ENCODE measurements at regions of chr15 and their contacts with region 1.

Region 1: GRCh38 chr15:44663409-44664308 is at the start of gene SPG11:
- DNase-seq: peak; percentile 88
- ATAC-seq: peak; percentile 83
- H3K4me3 Mint-ChIP-seq: peak within 1 kb of the TSS; percentile 98
- H3K27ac Mint-ChIP-seq: peak within 1 kb of the TSS; percentile 99
- H3K4me1 Mint-ChIP-seq: peaks cover 58% of the 10 kb centered on the region
- H3K27me3 Mint-ChIP-seq: no peaks in the 10 kb centered on the region
- CTCF ChIP-seq: no peak
- total RNA-seq, gene SPG11: 132 and 161 TPM in 2 replicates

Region 2: GRCh38 chr15:44536962-44537734 is 126.5 kb before region 1 on chr15 and contains the start of gene EIF3J:
- CTCF ChIA-PET with region 1: no interaction called
- POLR2A ChIA-PET with region 1: interaction called, 4 read pairs
- intact Hi-C with region 1: loop called (anchors 1 kb)
- DNase-seq: peak; percentile 90
- ATAC-seq: peak; percentile 89
- H3K4me3 Mint-ChIP-seq: peak within 1 kb of the TSS; percentile 92
- H3K27ac Mint-ChIP-seq: peak within 1 kb of the TSS; percentile 93
- H3K4me1 Mint-ChIP-seq: peaks cover 50% of the 10 kb centered on the region
- H3K27me3 Mint-ChIP-seq: no peaks in the 10 kb centered on the region
- CTCF ChIP-seq: no peak
- total RNA-seq, gene EIF3J: 78.9 and 88.4 TPM in 2 replicates

Region 3: DNA sequence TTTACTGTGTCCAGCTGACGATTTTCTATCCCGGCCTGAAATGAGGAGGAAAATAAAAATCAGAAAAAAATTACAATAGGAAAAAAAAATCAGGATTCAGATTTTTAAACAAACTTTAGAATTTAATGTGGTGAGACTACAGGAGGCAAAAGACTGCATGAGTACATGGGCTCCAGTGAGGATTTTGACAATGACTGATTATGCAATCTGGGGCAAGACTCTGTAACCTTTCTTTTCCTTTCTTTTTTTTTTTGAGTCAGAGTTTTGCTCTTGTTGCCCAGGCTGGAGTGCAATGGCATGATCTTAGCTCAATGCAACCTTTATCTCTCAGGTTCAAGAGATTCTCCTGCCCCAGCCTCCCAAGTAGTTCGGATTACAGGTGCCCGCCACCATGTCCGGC is 30.1 kb before region 1 on chr15:
- CTCF ChIA-PET with region 1: no interaction called
- POLR2A ChIA-PET with region 1: interaction called, 6 read pairs
- intact Hi-C with region 1: loop called (anchors 5 kb)
- DNase-seq: no peak
- ATAC-seq: no peak
- H3K4me3 Mint-ChIP-seq: peak overlapping the region; percentile 35
- H3K27ac Mint-ChIP-seq: peak overlapping the region; percentile 82
- H3K4me1 Mint-ChIP-seq: peaks cover 8% of the 10 kb centered on the region
- H3K27me3 Mint-ChIP-seq: no peaks in the 10 kb centered on the region
- CTCF ChIP-seq: no peak

Region 4: DNA sequence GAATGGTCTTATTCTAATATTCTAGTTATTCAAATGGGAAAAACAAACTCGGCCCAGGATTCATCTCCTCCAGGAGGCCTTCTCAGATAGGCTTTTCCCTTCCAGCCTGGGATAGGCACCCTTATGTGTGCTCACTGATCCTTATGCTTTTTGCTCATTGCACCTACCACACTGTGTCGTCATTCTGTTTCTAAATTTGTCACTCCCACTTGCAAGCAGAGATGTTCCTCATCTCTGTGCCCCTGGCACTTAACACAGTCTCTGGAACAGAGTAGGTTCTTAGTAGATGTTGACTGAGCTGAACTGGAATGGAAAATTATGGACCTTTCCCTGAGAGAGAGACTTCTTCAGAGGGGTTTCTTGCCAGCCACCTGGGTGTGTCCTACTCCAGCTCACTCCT is 18.6 kb after region 1 on chr15:
- CTCF ChIA-PET with region 1: interaction called, 16 read pairs
- POLR2A ChIA-PET with region 1: interaction called, 60 read pairs
- intact Hi-C with region 1: loop called (anchors 1 kb)
- DNase-seq: no peak
- ATAC-seq: peak; percentile 26
- H3K4me3 Mint-ChIP-seq: peak overlapping the region; percentile 60
- H3K27ac Mint-ChIP-seq: peak overlapping the region; percentile 91
- H3K4me1 Mint-ChIP-seq: peaks cover 76% of the 10 kb centered on the region
- H3K27me3 Mint-ChIP-seq: no peaks in the 10 kb centered on the region
- CTCF ChIP-seq: no peak

Region 5: DNA sequence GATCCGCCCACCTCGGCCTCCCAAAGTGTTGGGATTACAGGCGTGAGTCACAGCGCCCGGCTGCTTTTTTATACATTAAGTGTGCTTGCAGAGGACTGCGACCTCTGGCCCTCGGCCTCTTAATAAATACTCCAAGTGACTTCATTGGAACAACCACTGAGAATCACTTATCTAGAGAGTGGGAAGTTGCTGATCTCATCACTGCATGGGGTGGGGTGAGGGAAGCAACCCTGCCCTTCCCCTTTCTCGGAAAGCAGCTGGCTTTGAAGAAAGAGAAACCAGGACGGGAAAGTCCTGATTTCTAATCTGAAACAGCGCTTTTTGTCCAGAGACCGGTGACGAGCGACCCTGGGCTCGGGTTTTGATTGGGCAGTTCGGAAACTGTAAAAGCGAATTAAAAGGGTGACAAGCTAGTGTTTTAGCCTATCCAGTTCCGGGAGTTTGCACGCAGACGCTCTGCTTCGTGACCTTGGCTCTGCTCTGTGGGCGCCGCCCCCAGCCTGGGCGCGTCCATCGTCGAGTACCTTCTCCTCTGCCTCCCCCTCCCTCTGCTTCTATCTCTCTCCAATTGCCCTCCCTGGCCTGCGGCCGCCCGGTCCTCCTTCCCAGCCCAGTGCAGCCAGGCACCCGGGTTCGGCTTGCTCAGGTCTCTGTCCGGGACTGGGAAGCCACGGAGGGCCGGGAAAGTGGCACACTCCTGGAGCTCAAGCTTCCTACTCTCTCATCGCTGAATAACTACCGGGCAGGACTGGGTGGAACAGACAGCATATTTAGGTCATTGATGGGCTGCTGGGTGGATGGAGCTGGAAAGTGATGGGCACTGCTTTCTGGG is 65.1 kb after region 1 on chr15:
- CTCF ChIA-PET with region 1: interaction called, 239 read pairs
- POLR2A ChIA-PET with region 1: interaction called, 798 read pairs
- intact Hi-C with region 1: loop called (anchors 1 kb)
- DNase-seq: peak; percentile 86
- ATAC-seq: peak; percentile 74
- H3K4me3 Mint-ChIP-seq: peak overlapping the region; percentile 99
- H3K27ac Mint-ChIP-seq: peak overlapping the region; percentile 100
- H3K4me1 Mint-ChIP-seq: peaks cover 75% of the 10 kb centered on the region
- H3K27me3 Mint-ChIP-seq: no peaks in the 10 kb centered on the region
- CTCF ChIP-seq: no peak

Region 6: DNA sequence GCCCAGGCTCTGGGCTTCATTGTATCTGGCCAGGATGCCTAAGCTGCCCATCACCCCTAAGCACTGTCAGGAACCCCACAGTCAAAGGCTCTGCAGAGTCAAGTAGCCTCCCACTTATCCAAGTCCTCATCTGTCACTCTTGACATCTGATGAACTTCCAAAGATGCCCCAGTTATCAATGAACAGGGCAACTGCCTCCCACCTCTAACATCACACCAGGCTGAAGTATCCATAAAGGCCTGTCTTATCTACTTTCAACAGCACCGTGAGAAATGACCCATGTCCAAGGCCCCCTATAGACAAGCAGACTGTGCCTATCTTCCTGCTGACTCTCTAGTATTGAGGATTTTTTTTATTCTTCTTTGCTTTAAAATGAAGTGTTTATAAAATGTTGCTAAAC is 129.1 kb after region 1 on chr15:
- CTCF ChIA-PET with region 1: no interaction called
- POLR2A ChIA-PET with region 1: no interaction called
- intact Hi-C with region 1: no loop called
- DNase-seq: no peak
- ATAC-seq: no peak
- H3K4me3 Mint-ChIP-seq: no peak overlapping the region
- H3K27ac Mint-ChIP-seq: no peak overlapping the region
- H3K4me1 Mint-ChIP-seq: no peaks in the 10 kb centered on the region
- H3K27me3 Mint-ChIP-seq: no peaks in the 10 kb centered on the region
- CTCF ChIP-seq: no peak

Region 7: DNA sequence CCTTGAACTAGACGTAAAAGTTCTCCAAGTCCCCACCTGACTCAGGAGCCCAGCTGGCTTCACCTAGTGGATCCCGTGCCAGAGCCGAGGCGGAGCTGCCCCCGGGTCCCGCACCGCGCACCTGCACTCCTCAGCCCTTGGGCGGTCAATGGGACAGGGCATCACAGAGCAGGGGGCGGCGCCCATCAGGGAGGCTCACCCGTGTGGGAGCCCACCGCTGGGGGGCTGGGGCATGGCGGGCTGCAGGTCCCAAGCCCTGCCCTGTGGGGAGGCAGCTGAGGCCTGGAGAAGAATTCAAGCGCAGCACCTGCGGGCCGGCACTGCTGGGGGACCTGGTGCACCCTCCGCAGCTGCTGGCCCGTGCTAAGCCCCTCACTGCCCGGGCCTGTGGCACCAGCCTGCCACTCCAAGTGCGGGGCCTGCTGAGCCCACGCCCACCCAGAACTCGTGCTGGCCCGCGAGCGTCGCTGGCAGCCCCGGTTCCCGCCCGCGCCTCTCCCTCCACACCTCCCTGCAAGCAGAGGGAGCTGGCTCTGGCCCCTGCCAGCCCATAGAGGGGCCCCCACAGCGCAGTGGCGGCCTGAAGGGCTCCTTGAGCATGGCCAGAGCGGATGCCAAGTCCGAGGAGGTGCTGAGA is 987.3 kb after region 1 on chr15:
- CTCF ChIA-PET with region 1: no interaction called
- POLR2A ChIA-PET with region 1: interaction called, 14 read pairs
- intact Hi-C with region 1: no loop called
- DNase-seq: no peak
- ATAC-seq: no peak
- H3K4me3 Mint-ChIP-seq: no peak overlapping the region
- H3K27ac Mint-ChIP-seq: no peak overlapping the region
- H3K4me1 Mint-ChIP-seq: peaks cover 37% of the 10 kb centered on the region
- H3K27me3 Mint-ChIP-seq: no peaks in the 10 kb centered on the region
- CTCF ChIP-seq: no peak

Region 8: GRCh38 chr15:46166750-46167149 is 1503.1 kb after region 1 on chr15:
- CTCF ChIA-PET with region 1: no interaction called
- POLR2A ChIA-PET with region 1: no interaction called
- intact Hi-C with region 1: no loop called
- DNase-seq: no peak
- ATAC-seq: no peak
- H3K4me3 Mint-ChIP-seq: no peak overlapping the region
- H3K27ac Mint-ChIP-seq: no peak overlapping the region
- H3K4me1 Mint-ChIP-seq: no peaks in the 10 kb centered on the region
- H3K27me3 Mint-ChIP-seq: no peaks in the 10 kb centered on the region
- CTCF ChIP-seq: no peak